BJ (cell line): ENCODE measurements at regions of chr17 and their contacts with region 1.

Region 1: GRCh38 chr17:63478791-63479494 is 2.1 kb downstream of the ACE start:
- DNase-seq: peak; percentile 63
- H3K4me3 ChIP-seq: no peak overlapping the region
- H3K27me3 ChIP-seq: no peaks in the 10 kb centered on the region; the same call in none of the 2 replicates
- CTCF ChIP-seq: peak; percentile 97

Region 2: DNA sequence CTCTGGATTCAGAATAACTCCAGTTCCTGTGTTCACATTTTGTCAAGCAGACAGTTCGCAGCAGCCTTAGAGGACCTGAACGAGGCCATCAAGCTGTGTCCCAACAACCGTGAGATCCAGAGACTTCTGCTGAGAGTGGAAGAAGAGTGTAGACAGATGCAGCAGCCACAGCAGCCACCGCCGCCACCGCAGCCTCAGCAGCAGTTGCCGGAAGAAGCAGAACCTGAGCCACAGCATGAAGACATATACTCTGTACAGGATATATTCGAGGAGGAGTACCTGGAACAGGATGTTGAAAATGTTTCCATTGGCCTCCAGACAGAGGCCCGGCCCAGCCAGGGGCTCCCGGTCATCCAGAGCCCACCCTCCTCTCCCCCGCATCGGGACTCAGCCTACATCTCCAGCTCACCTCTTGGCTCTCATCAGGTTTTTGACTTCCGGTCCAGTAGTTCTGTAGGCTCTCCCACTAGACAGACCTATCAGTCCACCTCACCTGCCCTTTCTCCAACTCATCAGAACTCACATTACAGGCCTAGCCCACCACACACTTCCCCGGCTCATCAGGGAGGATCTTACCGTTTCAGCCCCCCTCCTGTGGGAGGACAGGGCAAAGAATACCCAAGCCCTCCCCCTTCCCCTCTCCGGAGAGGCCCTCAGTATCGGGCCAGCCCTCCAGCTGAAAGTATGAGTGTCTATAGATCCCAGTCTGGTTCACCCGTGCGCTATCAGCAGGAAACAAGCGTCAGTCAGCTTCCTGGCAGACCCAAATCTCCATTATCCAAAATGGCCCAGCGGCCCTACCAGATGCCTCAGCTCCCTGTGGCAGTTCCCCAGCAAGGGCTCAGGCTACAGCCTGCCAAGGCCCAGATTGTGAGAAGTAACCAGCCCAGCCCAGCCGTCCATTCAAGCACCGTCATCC is 58.7 kb before region 1 on chr17:
- CTCF ChIA-PET with region 1: interaction called, 135 read pairs
- POLR2A ChIA-PET with region 1: no interaction called
- DNase-seq: no peak
- H3K4me3 ChIP-seq: no peak overlapping the region
- H3K27me3 ChIP-seq: no peaks in the 10 kb centered on the region
- CTCF ChIP-seq: no peak

Region 3: DNA sequence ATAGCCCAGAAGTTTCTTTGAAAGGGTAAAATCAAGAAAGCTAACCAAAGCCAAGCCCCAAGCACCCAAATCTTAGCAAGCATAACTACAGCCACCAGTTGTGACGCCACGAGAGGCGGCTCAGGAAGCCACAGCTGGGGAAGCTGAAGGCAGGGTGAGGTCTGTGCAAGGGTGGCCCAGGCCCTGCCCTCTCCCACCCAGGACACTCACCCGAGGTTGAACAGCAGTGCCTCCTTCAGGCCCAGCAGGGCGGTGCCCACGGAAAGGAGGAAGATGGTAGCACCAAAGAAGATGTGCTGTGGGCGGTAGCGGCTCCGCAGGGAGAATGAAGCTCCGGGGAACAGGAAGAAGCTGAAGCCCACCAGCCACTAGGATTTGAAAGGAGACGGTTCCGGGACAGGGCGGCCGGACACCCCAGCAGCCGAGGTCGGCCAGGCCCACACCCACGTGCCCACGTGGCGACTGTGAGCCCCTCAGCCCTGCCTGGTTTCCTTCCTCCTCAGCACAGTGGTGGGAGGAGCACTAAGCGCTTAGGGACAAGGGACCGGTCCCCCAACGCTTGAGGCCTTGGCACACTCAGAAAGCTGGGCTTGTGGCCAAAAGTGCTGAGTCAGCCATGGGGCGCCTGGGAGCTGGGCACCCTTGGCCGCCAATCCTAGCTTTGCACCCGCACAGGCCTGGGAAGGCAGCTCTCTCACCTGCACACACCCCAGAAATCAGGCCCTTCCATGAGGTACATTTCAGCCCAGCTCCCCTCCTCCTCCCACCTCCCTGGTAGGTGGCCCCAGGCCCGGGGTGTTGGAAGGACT is 43.9 kb before region 1 on chr17:
- CTCF ChIA-PET with region 1: interaction called, 77 read pairs
- POLR2A ChIA-PET with region 1: no interaction called
- DNase-seq: no peak
- H3K4me3 ChIP-seq: no peak overlapping the region
- H3K27me3 ChIP-seq: no peaks in the 10 kb centered on the region
- CTCF ChIP-seq: 0 out of 2 replicates have a peak, but pooled peaks have one; percentile 14

Region 4: DNA sequence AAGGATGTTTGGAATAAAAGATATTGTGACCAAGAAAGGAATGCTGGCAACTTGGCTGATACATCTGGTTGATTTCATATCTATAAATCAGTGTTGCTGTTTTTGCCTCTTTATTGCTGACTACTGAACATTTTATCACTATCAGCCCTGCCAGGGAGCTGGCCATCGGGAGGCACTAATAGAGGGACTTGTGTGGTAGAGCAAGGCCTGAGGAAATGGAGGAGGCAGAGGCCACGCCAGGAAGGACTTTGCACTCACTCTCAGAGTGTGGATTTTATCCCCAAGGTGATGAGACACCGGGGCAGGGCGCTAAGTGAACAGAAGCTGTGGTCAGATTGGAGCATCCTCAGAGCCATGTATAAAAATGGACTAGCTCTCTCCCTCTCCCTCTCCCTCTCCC is 23.5 kb before region 1 on chr17:
- CTCF ChIA-PET with region 1: interaction called, 11 read pairs
- POLR2A ChIA-PET with region 1: no interaction called
- DNase-seq: no peak
- H3K4me3 ChIP-seq: no peak overlapping the region
- H3K27me3 ChIP-seq: peaks cover 2% of the 10 kb centered on the region; the same call in 1 of the 2 replicates
- CTCF ChIP-seq: no peak

Region 5: GRCh38 chr17:63497708-63498483 is 19.0 kb after region 1 on chr17:
- CTCF ChIA-PET with region 1: interaction called, 27 read pairs
- POLR2A ChIA-PET with region 1: no interaction called
- DNase-seq: no peak
- H3K4me3 ChIP-seq: no peak overlapping the region
- H3K27me3 ChIP-seq: no peaks in the 10 kb centered on the region
- CTCF ChIP-seq: no peak